Calu3 (cell line): ENCODE measurements at regions of chr12 and their contacts with region 1.

Region 1: GRCh38 chr12:91361864-91362263 is 179.2 kb upstream of the DCN start:
- DNase-seq: no peak
- H3K4me3 Mint-ChIP-seq: peak overlapping the region; percentile 8
- H3K27ac Mint-ChIP-seq: no peak overlapping the region
- H3K4me1 Mint-ChIP-seq: peaks cover 26% of the 10 kb centered on the region
- H3K27me3 Mint-ChIP-seq: no peaks in the 10 kb centered on the region
- CTCF ChIP-seq: peak; percentile 58

Region 2: GRCh38 chr12:91388552-91388965 is 26.7 kb after region 1 on chr12:
- CTCF ChIA-PET with region 1: no interaction called
- intact Hi-C with region 1: no loop called
- DNase-seq: no peak
- H3K4me3 Mint-ChIP-seq: no peak overlapping the region
- H3K27ac Mint-ChIP-seq: no peak overlapping the region
- H3K4me1 Mint-ChIP-seq: peaks cover 11% of the 10 kb centered on the region
- H3K27me3 Mint-ChIP-seq: no peaks in the 10 kb centered on the region
- CTCF ChIP-seq: no peak

Region 3: DNA sequence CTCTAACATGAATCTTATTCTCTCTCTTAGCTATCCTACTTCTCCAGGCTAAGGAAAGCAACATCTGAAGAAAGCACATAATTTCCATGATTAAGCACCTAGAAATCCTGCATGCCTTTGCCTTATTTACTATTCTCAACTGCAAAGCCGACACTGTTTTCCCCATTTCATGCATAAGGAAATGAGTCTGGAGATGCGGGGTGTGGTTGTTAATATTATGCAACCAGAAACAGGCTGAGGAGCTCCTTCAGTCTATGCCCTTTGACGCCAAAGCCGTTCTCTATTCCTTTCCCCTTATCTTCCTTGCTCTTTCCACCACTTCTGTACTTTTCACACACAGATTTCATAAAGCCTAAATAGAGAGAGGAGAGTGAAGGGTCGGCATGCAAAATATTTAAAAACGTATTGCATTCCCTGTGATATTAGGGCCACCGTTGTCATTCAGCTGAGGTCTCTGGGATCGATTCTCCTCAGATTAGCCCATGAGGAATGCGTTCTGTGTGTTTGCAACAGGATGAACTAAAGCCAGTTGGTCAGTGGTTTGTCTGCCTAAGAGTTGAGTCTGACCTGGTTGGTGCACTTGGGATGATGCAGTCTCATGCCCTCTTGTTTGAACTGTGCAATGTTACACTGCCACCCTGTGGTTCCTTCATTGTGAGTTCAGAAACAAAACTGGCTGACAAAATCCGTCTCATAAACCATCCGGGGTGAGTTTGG is 1287.8 kb after region 1 on chr12:
- CTCF ChIA-PET with region 1: interaction called, 6 read pairs
- intact Hi-C with region 1: loop called (anchors 1 kb)
- DNase-seq: peak; percentile 78
- H3K4me3 Mint-ChIP-seq: peak overlapping the region; percentile 54
- H3K27ac Mint-ChIP-seq: peak overlapping the region; percentile 71
- H3K4me1 Mint-ChIP-seq: peaks cover 47% of the 10 kb centered on the region
- H3K27me3 Mint-ChIP-seq: no peaks in the 10 kb centered on the region
- CTCF ChIP-seq: peak; percentile 63